ENCODE measurements at regions of chr11 and their contacts with region 1.

Region 1: DNA sequence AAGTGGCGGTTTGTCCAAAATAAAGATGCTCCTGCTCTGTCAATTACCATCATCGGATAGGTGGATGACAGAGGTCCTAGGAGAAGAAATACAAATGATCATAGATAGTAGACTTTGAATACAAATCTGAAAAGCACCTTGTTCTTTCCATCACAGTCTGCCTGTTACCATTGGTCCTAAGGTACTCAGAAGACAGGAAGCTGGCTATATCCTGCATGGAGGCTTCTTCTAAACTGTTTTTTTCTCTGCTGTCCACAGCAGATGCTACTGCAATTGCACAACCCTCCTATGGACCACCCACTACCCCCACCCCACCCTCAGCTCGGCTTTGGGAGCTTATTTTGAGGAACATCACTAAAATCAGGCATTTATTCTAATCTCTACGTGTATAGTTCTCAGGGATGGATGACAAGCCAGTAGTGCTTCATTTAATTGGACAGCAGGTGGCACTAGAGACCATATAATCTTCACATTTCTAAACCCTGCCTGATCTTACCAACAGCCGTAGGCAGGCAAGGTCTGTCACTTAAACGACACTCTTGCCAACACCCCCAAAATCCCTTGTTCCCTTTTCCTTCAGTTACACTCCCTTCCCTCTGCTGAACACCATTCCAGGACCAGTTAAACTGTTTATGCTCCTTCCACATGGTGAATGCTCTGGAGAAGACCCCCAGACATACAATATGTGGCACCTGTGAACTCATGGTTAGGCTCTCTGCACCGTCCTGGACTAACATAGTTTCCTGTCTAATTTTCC is 6.6 kb upstream of the PTS start:
- DNase-seq: peak; percentile 52
- H3K4me3 ChIP-seq: no peak overlapping the region
- H3K27ac ChIP-seq: no peak overlapping the region
- H3K4me1 ChIP-seq: no peaks in the 10 kb centered on the region
- H3K27me3 ChIP-seq: no peaks in the 10 kb centered on the region
- CTCF ChIP-seq: peak; percentile 66

Region 2: DNA sequence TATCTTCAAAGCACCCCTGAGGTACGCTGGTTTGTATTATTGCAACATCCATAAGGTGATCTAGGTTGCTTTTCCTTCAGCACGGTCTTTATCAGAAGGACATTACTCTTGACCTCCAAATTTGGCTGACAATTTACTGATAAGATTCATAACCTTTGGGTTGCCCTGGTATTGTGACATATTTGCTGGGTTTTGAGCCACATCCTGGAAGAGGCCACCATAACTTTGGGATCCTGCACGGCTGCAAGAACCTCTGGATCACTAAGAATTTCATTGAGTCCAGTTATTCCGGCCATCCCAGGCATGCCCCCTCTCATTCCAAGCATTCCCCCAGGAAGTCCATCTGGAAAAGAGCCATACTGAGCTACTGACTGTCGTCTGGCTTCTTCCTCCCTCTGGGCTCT is 47.5 kb after region 1 on chr11:
- intact Hi-C with region 1: no loop called
- DNase-seq: no peak
- H3K4me3 ChIP-seq: no peak overlapping the region
- H3K27ac ChIP-seq: no peak overlapping the region
- H3K4me1 ChIP-seq: no peaks in the 10 kb centered on the region
- H3K27me3 ChIP-seq: no peaks in the 10 kb centered on the region
- CTCF ChIP-seq: no peak

Region 3: DNA sequence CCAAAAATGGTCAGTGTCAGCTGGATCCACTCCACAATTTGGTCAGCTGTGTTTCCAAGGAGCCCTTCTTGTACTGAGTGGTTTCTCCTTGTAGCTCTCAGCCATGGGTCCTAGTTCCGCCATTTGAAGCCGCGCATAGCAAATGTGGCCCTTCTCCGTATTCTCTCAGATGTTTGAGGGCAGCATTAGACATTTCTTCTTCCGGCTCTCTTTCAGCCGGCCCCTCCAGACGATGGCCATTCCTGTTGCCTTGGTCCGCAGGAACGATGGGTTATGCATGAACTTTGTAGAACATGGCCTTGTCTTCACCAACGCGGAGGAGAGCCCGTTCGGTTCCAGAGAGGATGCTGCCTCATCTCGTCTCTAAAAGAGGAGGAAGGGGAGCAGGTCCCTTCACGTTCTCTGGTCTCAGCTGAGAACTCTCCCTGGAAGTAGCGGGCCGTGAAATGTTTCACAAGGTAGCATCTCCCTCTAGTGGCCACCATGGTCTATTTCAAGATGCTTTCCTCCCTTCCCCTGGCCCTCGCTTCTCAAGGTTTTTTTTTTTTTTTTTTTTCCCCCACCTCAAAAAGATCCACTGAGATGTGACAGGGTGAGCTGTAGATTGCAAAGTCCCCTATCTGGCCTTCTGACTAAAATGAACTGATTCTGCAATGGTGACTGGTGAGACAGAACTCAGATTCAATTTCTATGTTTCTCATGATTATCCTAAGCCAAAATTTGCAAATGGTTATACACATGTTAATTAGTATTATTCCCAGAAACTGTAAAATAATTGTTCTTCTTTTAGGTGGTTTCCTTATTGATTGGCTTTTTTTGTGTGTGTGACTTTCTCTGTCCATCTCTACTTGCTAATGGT is 60.8 kb after region 1 on chr11:
- intact Hi-C with region 1: loop called (anchors 2 kb)
- DNase-seq: peak; percentile 77
- H3K4me3 ChIP-seq: peak overlapping the region; percentile 40
- H3K27ac ChIP-seq: no peak overlapping the region
- H3K4me1 ChIP-seq: peaks cover 4% of the 10 kb centered on the region
- H3K27me3 ChIP-seq: no peaks in the 10 kb centered on the region
- CTCF ChIP-seq: peak; percentile 34

Region 4: DNA sequence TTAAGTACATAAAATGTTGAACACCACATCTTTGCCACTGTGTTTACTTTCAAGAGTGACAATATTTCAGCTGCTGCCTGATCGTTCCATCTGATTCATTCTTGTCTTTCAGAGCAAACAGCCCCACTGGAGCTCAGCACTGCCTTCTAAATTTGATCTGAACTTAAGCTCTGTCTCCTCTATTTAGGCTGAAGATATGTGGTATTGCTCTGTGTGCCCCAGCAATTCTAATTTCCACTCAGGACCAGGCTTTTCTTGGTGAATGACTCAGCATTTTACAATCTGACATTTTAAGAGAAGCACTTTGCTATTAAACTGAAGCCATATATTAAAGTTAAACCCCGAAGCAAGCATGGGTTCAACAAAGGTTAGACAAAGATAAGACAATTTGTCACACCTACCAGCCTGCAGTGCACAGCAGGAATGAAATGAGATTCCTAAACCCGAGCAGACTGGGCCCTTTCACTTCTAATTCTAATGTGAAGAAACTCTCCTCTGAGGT is 82.6 kb after region 1 on chr11:
- intact Hi-C with region 1: no loop called
- DNase-seq: no peak
- H3K4me3 ChIP-seq: no peak overlapping the region
- H3K27ac ChIP-seq: no peak overlapping the region
- H3K4me1 ChIP-seq: no peaks in the 10 kb centered on the region
- H3K27me3 ChIP-seq: no peaks in the 10 kb centered on the region
- CTCF ChIP-seq: no peak

Region 5: GRCh38 chr11:112555491-112556364 is 336.1 kb after region 1 on chr11:
- intact Hi-C with region 1: loop called (anchors 5 kb)
- DNase-seq: peak; percentile 59
- H3K4me3 ChIP-seq: no peak overlapping the region
- H3K27ac ChIP-seq: no peak overlapping the region
- H3K4me1 ChIP-seq: no peaks in the 10 kb centered on the region
- H3K27me3 ChIP-seq: no peaks in the 10 kb centered on the region
- CTCF ChIP-seq: peak; percentile 70

Region 6: DNA sequence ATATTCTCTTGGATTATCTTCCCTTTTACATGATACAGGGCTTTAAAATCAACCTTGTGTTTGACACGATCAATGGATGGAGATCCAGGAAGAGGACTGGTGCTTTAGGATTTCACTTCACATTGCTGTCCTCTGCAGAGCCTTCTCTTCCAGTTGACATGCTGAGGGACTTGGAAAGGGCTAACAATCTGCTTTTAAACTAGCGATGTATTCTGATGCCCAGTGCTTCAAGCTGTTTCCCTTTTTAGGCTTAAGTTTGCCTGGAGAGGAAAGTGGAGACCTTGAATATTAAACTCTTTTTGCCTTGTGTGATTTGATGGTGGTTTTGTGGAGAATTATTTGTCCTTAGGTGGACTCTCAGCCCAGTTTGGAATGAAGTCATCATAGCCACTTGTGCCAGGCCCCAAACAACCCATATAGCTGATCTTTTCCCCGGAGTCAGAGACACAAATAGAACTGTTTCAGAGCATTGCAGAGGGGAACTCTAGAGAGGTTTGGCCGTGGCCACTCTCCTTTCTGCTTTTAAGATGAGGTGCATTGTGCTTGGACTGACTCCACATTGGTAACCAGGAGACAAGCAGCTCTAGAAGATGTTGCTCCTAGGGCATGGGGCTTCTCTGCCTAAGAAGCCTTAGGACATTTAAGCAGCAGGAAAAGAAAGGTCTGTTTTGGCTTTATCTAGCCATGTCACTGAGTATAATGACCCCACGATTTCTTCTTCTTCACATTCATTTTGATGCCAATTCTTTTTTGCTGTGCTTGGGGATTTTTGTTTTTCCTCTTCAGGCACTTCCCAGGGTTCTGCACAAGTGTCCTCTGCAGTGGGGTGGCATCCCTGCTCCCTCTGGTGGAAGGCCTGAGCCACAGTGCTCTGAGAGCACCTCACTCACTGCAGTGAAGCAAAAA is 894.4 kb after region 1 on chr11:
- intact Hi-C with region 1: loop called (anchors 10 kb)
- DNase-seq: peak; percentile 25
- H3K4me3 ChIP-seq: no peak overlapping the region
- H3K27ac ChIP-seq: no peak overlapping the region
- H3K4me1 ChIP-seq: no peaks in the 10 kb centered on the region
- H3K27me3 ChIP-seq: no peaks in the 10 kb centered on the region
- CTCF ChIP-seq: peak; percentile 51

Region 7: DNA sequence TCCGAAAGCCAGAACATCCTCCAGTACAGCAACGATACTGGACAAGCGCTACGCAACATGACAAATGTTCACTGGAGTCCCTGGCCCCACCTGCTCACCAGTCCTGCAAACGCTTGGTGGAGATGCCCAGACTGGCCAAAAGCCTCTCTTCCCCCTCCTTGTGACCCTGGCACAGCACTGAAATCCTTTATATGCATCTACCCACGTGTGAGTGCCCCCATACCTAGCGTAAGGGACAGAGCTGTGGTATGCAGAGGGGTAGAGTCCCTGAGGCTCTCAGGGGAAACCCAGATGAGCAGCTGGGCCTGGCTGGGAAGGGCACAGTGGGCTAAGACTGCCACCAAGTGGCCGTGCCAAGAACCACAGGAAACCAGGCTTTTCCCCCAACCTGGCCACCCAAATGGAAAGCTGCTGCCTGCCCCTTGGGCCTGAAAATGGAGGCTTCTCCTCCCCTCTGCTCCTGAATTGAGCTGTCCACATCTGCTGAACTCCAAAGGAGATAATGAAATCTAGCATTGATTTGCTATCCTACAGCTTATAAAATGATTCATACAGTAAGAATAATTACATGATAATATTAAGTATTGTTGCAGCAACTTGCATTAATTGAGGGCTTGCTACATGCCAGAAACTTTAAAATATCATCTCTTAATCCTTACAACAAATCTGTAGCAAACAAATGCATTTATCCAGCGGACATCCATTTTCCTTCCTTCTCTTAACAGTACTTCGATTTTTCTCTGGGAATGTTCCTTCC is 1070.0 kb after region 1 on chr11:
- intact Hi-C with region 1: loop called (anchors 10 kb)
- DNase-seq: peak; percentile 43
- H3K4me3 ChIP-seq: no peak overlapping the region
- H3K27ac ChIP-seq: no peak overlapping the region
- H3K4me1 ChIP-seq: no peaks in the 10 kb centered on the region
- H3K27me3 ChIP-seq: no peaks in the 10 kb centered on the region
- CTCF ChIP-seq: peak; percentile 83

Measured in colonic mucosa (tissue), 4 donors.